ENCODE measurements at regions of chrX and their contacts with region 1.

Region 1: GRCh38 chrX:153726286-153727122 is 1.8 kb downstream of the ABCD1 start:
- DNase-seq: peak; percentile 60
- ATAC-seq: peak; percentile 32
- H3K4me3 Mint-ChIP-seq: peak overlapping the region; percentile 76
- H3K27ac Mint-ChIP-seq: peak overlapping the region; percentile 78
- H3K4me1 Mint-ChIP-seq: peaks cover 18% of the 10 kb centered on the region
- H3K27me3 Mint-ChIP-seq: no peaks in the 10 kb centered on the region

Region 2: DNA sequence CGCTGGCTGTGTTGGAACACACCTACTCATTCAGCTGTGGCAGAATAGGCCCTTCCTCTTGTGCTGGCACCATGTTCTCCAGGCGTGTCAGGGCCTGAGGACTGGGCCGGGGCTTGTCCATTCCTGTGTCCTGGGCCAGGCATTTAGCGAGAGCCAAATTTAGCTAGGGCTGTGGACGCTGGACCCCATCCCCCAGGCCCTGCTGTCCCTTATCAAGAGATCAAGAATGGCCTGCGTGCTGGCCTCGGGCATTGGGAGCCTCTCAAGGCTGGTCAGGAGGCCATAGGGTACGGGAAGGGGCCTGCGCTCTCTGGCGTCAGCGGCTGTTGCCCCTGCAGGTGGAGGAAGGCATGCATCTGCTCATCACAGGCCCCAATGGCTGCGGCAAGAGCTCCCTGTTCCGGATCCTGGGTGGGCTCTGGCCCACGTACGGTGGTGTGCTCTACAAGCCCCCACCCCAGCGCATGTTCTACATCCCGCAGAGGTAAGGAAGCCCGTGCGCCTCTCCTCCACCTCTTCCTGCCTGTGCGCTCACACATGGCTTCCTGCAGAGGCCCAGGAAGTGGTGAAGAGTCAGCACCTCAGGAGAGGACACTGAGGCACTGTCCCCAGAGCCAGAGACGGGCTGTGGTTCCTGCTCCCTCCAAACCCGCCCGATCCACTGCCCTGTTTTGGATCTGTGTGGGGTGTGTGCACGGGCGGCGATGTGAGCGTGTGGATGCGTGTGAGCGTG is 13.4 kb after region 1 on chrX:
- POLR2A ChIA-PET with region 1: interaction called, 13 read pairs
- DNase-seq: peak; percentile 46
- ATAC-seq: peak; percentile 94
- H3K4me3 Mint-ChIP-seq: peak overlapping the region; percentile 76
- H3K27ac Mint-ChIP-seq: peak overlapping the region; percentile 90
- H3K4me1 Mint-ChIP-seq: peaks cover 21% of the 10 kb centered on the region
- H3K27me3 Mint-ChIP-seq: peaks cover 2% of the 10 kb centered on the region

Region 3: GRCh38 chrX:153763989-153764755 is 37.7 kb after region 1 on chrX and contains the start of gene PLXNB3:
- POLR2A ChIA-PET with region 1: no interaction called
- DNase-seq: peak; percentile 81
- ATAC-seq: peak; percentile 71
- H3K4me3 Mint-ChIP-seq: peak within 1 kb of the TSS; percentile 44
- H3K27ac Mint-ChIP-seq: no peak within 1 kb of the TSS
- H3K4me1 Mint-ChIP-seq: peaks cover 9% of the 10 kb centered on the region
- H3K27me3 Mint-ChIP-seq: no peaks in the 10 kb centered on the region
- total RNA-seq, gene PLXNB3: 1.3 to 2.1 TPM